ENCODE measurements at regions of chr11 and their contacts with region 1.

Region 1: GRCh38 chr11:111846636-111847035 is 24.7 kb downstream of the ALG9 start:
- DNase-seq: no peak
- ATAC-seq: no peak
- H3K4me3 Mint-ChIP-seq: no peak overlapping the region
- H3K27ac Mint-ChIP-seq: no peak overlapping the region
- H3K4me1 Mint-ChIP-seq: no peaks in the 10 kb centered on the region
- H3K27me3 Mint-ChIP-seq: no peaks in the 10 kb centered on the region

Region 2: GRCh38 chr11:111194860-111195568 is 651.6 kb before region 1 on chr11:
- CTCF ChIA-PET with region 1: no interaction called
- POLR2A ChIA-PET with region 1: no interaction called
- intact Hi-C with region 1: no loop called
- DNase-seq: no peak
- ATAC-seq: no peak
- H3K4me3 Mint-ChIP-seq: no peak overlapping the region
- H3K27ac Mint-ChIP-seq: no peak overlapping the region
- H3K4me1 Mint-ChIP-seq: no peaks in the 10 kb centered on the region
- H3K27me3 Mint-ChIP-seq: peaks cover 3% of the 10 kb centered on the region

Region 3: DNA sequence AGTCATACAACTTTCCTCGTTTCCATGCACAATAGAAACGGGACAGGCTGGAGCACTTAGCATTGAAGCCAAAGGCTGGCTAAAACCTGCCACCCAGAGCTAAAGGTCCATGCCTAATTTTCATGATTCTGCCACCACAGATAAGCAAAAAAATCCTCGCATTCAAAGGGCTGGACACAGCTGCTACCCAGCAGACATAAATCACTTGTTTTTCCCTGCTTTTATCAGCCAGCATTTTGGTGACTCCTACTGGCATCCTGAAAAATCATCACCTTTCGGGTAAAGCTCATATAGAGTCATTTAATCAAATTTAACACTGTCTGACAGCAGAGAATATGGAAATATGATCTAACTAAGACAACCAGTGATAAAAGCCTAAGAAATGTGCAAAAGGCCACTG is 13.1 kb before region 1 on chr11:
- CTCF ChIA-PET with region 1: interaction called, 22 read pairs
- POLR2A ChIA-PET with region 1: no interaction called
- intact Hi-C with region 1: no loop called
- DNase-seq: no peak
- ATAC-seq: no peak
- H3K4me3 Mint-ChIP-seq: no peak overlapping the region
- H3K27ac Mint-ChIP-seq: no peak overlapping the region
- H3K4me1 Mint-ChIP-seq: peaks cover 23% of the 10 kb centered on the region
- H3K27me3 Mint-ChIP-seq: no peaks in the 10 kb centered on the region

Region 4: GRCh38 chr11:111926505-111927391 is 80.1 kb after region 1 on chr11:
- CTCF ChIA-PET with region 1: no interaction called
- POLR2A ChIA-PET with region 1: no interaction called
- intact Hi-C with region 1: no loop called
- DNase-seq: peak; percentile 96
- ATAC-seq: peak; percentile 91
- H3K4me3 Mint-ChIP-seq: peak overlapping the region; percentile 75
- H3K27ac Mint-ChIP-seq: peak overlapping the region; percentile 92
- H3K4me1 Mint-ChIP-seq: peaks cover 18% of the 10 kb centered on the region
- H3K27me3 Mint-ChIP-seq: no peaks in the 10 kb centered on the region

Region 5: GRCh38 chr11:112074026-112074811 is 227.6 kb after region 1 on chr11 and contains the start of gene NKAPD1:
- CTCF ChIA-PET with region 1: no interaction called
- POLR2A ChIA-PET with region 1: no interaction called
- intact Hi-C with region 1: no loop called
- DNase-seq: peak; percentile 86
- ATAC-seq: peak; percentile 92
- H3K4me3 Mint-ChIP-seq: peak within 1 kb of the TSS; percentile 94
- H3K27ac Mint-ChIP-seq: peak within 1 kb of the TSS; percentile 93
- H3K4me1 Mint-ChIP-seq: peaks cover 26% of the 10 kb centered on the region
- H3K27me3 Mint-ChIP-seq: peaks cover 11% of the 10 kb centered on the region
- total RNA-seq, gene NKAPD1: 23.7 to 45.3 TPM